ENCODE measurements at regions of chr21 and their contacts with region 1.

Region 1: DNA sequence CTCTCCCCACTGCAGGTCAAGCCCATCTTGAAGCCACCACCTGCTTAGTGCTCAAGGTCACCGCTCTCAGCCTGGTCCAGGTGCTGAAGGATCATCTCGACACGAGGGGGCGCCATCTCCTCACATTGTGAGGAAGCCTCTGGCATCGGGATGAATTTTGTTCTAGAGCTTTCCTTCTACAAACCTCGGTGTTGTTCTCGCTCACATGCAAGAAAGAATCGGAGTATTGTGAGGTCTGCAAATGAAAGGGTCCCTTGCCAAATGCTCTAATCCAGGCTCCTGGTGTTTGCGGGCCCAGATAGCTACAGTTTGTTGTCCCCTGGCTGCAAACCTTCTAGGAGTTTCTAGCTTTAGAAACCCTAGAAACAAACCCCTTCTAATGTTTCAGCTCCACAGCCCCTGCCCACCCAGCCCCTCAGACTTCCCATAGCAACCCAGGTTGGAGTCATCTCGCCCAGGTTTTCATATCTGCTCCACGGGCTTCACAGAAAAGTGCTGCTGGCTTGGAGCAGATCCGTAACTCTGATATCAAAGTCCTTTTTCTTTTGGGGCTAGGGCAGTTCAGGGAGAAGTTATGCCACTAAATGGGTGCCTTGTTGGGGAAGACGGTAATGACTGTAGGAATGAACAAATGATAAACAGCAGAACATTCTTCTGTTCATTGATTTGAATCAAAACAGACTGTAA is 8.6 kb upstream of the ATP5PO start:
- DNase-seq: peak; percentile 73 to 90 (median 83)
- ATAC-seq: peak; percentile 97
- H3K4me3 ChIP-seq: no peak overlapping the region
- H3K4me3 Mint-ChIP-seq: peak overlapping the region in 7 of 10 donors; percentile 25 to 58 (median 45)
- H3K27ac ChIP-seq: no peak overlapping the region
- H3K27ac Mint-ChIP-seq: peak overlapping the region; percentile 5 to 84 (median 75)
- H3K4me1 ChIP-seq: peaks cover 4 to 5% of the 10 kb centered on the region in 2 donors
- H3K4me1 Mint-ChIP-seq: peaks cover 0 to 21% (median 8%) of the 10 kb centered on the region in 7 donors
- H3K27me3 ChIP-seq: no peaks in the 10 kb centered on the region
- H3K27me3 Mint-ChIP-seq: peaks cover 0 to 3% (median 0%) of the 10 kb centered on the region in 5 donors

Region 2: GRCh38 chr21:33940164-33940880 is 16.1 kb after region 1 on chr21:
- CTCF ChIA-PET with region 1: interaction called, 9 read pairs
- POLR2A ChIA-PET with region 1: interaction called, 11 read pairs
- intact Hi-C with region 1: no loop called
- DNase-seq: no peak
- ATAC-seq: no peak
- H3K4me3 ChIP-seq: no peak overlapping the region
- H3K4me3 Mint-ChIP-seq: peak overlapping the region in 5 of 10 donors; percentile 7 to 55 (median 35)
- H3K27ac ChIP-seq: no peak overlapping the region
- H3K27ac Mint-ChIP-seq: peak overlapping the region; percentile 20 to 100 (median 88)
- H3K4me1 ChIP-seq: peaks cover 47 to 54% of the 10 kb centered on the region in 2 donors
- H3K4me1 Mint-ChIP-seq: peaks cover 25 to 83% (median 72%) of the 10 kb centered on the region in 7 donors
- H3K27me3 ChIP-seq: no peaks in the 10 kb centered on the region
- H3K27me3 Mint-ChIP-seq: no peaks in the 10 kb centered on the region

Region 3: GRCh38 chr21:33968080-33968994 is 44.1 kb after region 1 on chr21:
- CTCF ChIA-PET with region 1: interaction called, 11 read pairs
- POLR2A ChIA-PET with region 1: no interaction called
- intact Hi-C with region 1: no loop called
- DNase-seq: peak in 1 of 9 donors; percentile 7
- ATAC-seq: no peak
- H3K4me3 ChIP-seq: no peak overlapping the region
- H3K4me3 Mint-ChIP-seq: no peak overlapping the region
- H3K27ac ChIP-seq: no peak overlapping the region
- H3K27ac Mint-ChIP-seq: peak overlapping the region in 7 of 9 donors; percentile 17 to 66 (median 41)
- H3K4me1 ChIP-seq: no peaks in the 10 kb centered on the region
- H3K4me1 Mint-ChIP-seq: peaks cover 5 to 39% (median 24%) of the 10 kb centered on the region in 7 donors
- H3K27me3 ChIP-seq: no peaks in the 10 kb centered on the region
- H3K27me3 Mint-ChIP-seq: no peaks in the 10 kb centered on the region

Region 4: GRCh38 chr21:33993286-33994231 is 69.3 kb after region 1 on chr21:
- CTCF ChIA-PET with region 1: no interaction called
- POLR2A ChIA-PET with region 1: no interaction called
- intact Hi-C with region 1: loop called in 1 of 2 experiments (anchors 2 kb)
- DNase-seq: no peak
- ATAC-seq: peak; percentile 81
- H3K4me3 ChIP-seq: no peak overlapping the region
- H3K4me3 Mint-ChIP-seq: no peak overlapping the region
- H3K27ac ChIP-seq: no peak overlapping the region
- H3K27ac Mint-ChIP-seq: peak overlapping the region in 4 of 9 donors; percentile 6 to 51 (median 35)
- H3K4me1 ChIP-seq: peaks cover 6% of the 10 kb centered on the region in 2 donors
- H3K4me1 Mint-ChIP-seq: peaks cover 14 to 29% (median 17%) of the 10 kb centered on the region in 7 donors
- H3K27me3 ChIP-seq: no peaks in the 10 kb centered on the region
- H3K27me3 Mint-ChIP-seq: peaks cover 0 to 4% (median 0%) of the 10 kb centered on the region in 5 donors

Region 5: DNA sequence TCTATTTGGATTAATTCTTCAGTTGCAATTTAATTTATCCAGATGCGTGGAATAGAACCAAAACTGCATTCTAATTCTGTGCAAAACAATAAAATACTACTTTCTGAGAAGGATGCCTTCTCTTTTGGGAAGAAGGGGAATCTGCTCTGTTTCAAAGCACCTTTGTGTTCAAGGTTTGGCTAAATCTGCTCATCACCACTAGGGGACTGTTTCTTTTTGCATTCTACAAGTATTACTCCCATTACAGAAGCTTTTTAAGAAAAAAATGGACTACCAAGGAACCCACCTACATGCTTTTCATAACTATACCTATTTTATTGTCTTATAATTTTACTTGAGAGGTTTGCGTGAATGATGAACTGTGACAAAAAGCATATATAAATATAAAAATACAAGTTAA is 167.4 kb after region 1 on chr21:
- CTCF ChIA-PET with region 1: interaction called, 4 read pairs
- POLR2A ChIA-PET with region 1: no interaction called
- intact Hi-C with region 1: loop called in 1 of 2 experiments (anchors 5 kb)
- DNase-seq: no peak
- ATAC-seq: no peak
- H3K4me3 ChIP-seq: no peak overlapping the region
- H3K4me3 Mint-ChIP-seq: peak overlapping the region in 5 of 10 donors; percentile 17 to 54 (median 39)
- H3K27ac ChIP-seq: no peak overlapping the region
- H3K27ac Mint-ChIP-seq: peak overlapping the region in 5 of 9 donors; percentile 2 to 55 (median 38)
- H3K4me1 ChIP-seq: peaks cover 17 to 41% of the 10 kb centered on the region in 2 donors
- H3K4me1 Mint-ChIP-seq: peaks cover 1 to 74% (median 56%) of the 10 kb centered on the region in 7 donors
- H3K27me3 ChIP-seq: no peaks in the 10 kb centered on the region
- H3K27me3 Mint-ChIP-seq: no peaks in the 10 kb centered on the region

Region 6: GRCh38 chr21:34202553-34203372 is 278.5 kb after region 1 on chr21:
- CTCF ChIA-PET with region 1: interaction called, 23 read pairs
- POLR2A ChIA-PET with region 1: interaction called, 6 read pairs
- intact Hi-C with region 1: loop called (anchors 2 to 5 kb)
- DNase-seq: no peak
- ATAC-seq: no peak
- H3K4me3 ChIP-seq: peak overlapping the region; percentile 47
- H3K4me3 Mint-ChIP-seq: peak overlapping the region; percentile 70 to 92 (median 86)
- H3K27ac ChIP-seq: no peak overlapping the region
- H3K27ac Mint-ChIP-seq: peak overlapping the region in 8 of 9 donors; percentile 24 to 87 (median 63)
- H3K4me1 ChIP-seq: peaks cover 8 to 31% of the 10 kb centered on the region in 2 donors
- H3K4me1 Mint-ChIP-seq: peaks cover 28 to 64% (median 56%) of the 10 kb centered on the region in 7 donors
- H3K27me3 ChIP-seq: no peaks in the 10 kb centered on the region
- H3K27me3 Mint-ChIP-seq: no peaks in the 10 kb centered on the region

Region 7: DNA sequence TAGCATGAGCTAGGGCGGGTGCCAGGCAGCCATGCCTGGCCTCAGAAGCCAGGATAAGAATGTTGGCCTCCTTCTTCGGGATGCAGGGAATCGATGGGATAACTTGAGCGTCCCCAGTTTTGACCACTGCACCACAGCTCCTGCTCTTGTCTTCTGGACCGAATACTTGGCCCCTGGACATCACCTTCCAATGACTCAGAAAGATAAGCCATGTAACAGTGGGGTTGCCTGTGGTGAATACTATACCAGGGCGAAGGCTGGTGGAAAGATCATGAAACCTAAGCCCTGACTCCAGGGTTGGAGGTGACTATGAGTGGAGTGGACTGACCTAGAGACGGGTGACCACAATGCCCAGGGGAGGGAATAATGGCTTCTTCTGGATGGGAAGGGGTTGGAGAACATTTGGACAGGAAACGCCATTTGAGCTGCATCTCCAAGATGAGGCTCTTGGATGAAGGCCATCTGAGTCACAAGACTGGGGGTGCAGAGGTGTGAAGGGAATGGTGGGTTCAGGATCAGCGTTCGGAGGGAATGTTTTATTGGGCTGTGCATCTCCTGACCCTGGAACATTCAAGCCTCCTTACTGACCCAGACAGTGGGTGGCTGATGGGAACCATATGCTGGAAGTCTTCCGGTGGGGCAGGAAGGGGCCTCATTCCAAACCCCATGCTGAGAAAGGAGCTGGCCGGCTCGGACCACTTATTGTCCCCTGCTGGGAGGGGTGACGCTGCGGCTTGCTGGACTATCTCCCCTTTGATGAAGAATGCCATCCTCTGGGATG is 421.1 kb after region 1 on chr21:
- CTCF ChIA-PET with region 1: interaction called, 126 read pairs
- POLR2A ChIA-PET with region 1: interaction called, 17 read pairs
- intact Hi-C with region 1: loop called (anchors 1 kb)
- DNase-seq: no peak
- ATAC-seq: no peak
- H3K4me3 ChIP-seq: no peak overlapping the region
- H3K4me3 Mint-ChIP-seq: no peak overlapping the region
- H3K27ac ChIP-seq: no peak overlapping the region
- H3K27ac Mint-ChIP-seq: peak overlapping the region in 1 of 9 donors; percentile 74
- H3K4me1 ChIP-seq: no peaks in the 10 kb centered on the region
- H3K4me1 Mint-ChIP-seq: peaks cover 0 to 15% (median 5%) of the 10 kb centered on the region in 7 donors
- H3K27me3 ChIP-seq: no peaks in the 10 kb centered on the region
- H3K27me3 Mint-ChIP-seq: peaks cover 0 to 8% (median 0%) of the 10 kb centered on the region in 5 donors

Measured in naive thymus-derived CD4-positive, alpha-beta T cell (primary cell).